ENCODE measurements at regions of chr9 and their contacts with region 1.

Region 1: GRCh38 chr9:35646533-35647265 is 4.0 kb downstream of the SIT1 start:
- DNase-seq: peak in 1 of 2 experiments; percentile 98
- H3K4me3 ChIP-seq: peak overlapping the region; percentile 56 to 79 (median 60)
- H3K27ac ChIP-seq: no peak overlapping the region
- H3K4me1 ChIP-seq: peaks cover 0 to 17% (median 12%) of the 10 kb centered on the region in 4 experiments; a peak in 5 of 7 replicates
- H3K27me3 ChIP-seq: no peaks in the 10 kb centered on the region
- CTCF ChIP-seq: peak; percentile 89 to 98 (median 93)
- EP300 ChIP-seq: no peak
- POLR2A ChIP-seq: peak in 1 of 2 experiments; percentile 66; a peak in 1 of 3 replicates
- RAD21 ChIP-seq: peak; percentile 77 to 84

Region 2: DNA sequence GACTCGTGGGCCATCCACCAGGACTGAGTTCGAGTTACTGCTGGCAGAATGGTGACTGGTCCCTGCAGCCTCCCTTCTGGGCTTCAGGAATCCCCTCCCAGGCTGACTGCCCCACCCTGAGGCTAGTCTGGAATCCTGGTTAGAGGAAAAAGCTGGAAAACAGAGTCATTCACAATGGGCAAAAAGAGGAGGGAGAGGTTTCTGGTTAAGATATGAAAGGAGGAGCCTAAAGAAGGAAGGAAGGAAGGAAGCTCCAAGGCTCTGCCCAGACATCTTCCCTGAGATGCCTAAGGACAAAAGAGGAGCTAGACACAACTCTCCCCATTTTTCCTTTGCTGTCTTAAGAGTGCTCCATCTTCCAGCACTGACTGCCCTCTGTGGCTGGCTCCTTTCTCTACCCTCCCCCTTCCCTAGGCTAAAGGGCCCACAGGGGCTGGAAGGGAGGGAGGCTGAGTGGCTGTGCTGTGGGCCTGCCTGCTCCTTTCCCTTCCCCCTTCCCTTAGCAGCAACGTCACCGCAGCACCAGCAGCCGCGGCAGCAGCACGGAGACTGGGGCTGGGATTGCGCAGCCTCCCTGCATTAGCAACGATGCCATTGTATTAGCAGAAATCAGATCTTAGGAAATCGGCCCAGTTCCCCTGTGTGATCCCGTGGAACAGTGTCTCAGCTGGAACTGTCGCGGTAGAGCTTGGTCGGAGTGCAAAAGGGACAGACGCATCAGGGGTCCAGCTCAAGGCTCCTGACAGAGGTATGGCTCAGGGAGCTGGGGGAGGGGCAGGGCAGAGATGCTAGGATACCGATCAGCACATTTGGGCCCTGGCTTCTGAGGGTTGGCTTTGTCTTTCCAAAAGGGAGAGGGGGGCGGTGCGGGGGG is 108.1 kb before region 1 on chr9:
- CTCF ChIA-PET with region 1: no interaction called
- POLR2A ChIA-PET with region 1: no interaction called
- DNase-seq: peak in 1 of 2 experiments; percentile 73
- H3K4me3 ChIP-seq: peak overlapping the region; percentile 37 to 62 (median 46); a peak in 7 of 8 replicates
- H3K27ac ChIP-seq: no peak overlapping the region; the same call in 1 of the 2 replicates
- H3K4me1 ChIP-seq: peaks cover 10 to 22% (median 13%) of the 10 kb centered on the region in 4 experiments
- H3K27me3 ChIP-seq: no peaks in the 10 kb centered on the region
- CTCF ChIP-seq: no peak
- EP300 ChIP-seq: no peak
- POLR2A ChIP-seq: peak in 1 of 2 experiments; percentile 66; a peak in 2 of 3 replicates
- RAD21 ChIP-seq: 0 out of 4 replicates have a peak, but pooled peaks of 1 of the 2 experiments have one; percentile 2

Region 3: GRCh38 chr9:35603987-35604577 is 42.6 kb before region 1 on chr9:
- CTCF ChIA-PET with region 1: interaction called, 47 read pairs
- POLR2A ChIA-PET with region 1: interaction called, 3 read pairs
- DNase-seq: peak; percentile 98 to 100
- H3K4me3 ChIP-seq: peak overlapping the region; percentile 55 to 76 (median 66)
- H3K27ac ChIP-seq: no peak overlapping the region
- H3K4me1 ChIP-seq: peaks cover 0 to 15% (median 9%) of the 10 kb centered on the region in 4 experiments; a peak in 6 of 7 replicates
- H3K27me3 ChIP-seq: no peaks in the 10 kb centered on the region
- CTCF ChIP-seq: peak; percentile 77 to 86 (median 84)
- EP300 ChIP-seq: no peak; a peak in 1 of 3 replicates
- POLR2A ChIP-seq: peak in 1 of 2 experiments; percentile 60; a peak in 2 of 3 replicates
- RAD21 ChIP-seq: peak; percentile 55 to 70

Region 4: GRCh38 chr9:35616681-35617459 is 29.8 kb before region 1 on chr9:
- CTCF ChIA-PET with region 1: interaction called, 47 read pairs
- POLR2A ChIA-PET with region 1: interaction called, 7 read pairs
- DNase-seq: peak in 1 of 2 experiments; percentile 82
- H3K4me3 ChIP-seq: peak overlapping the region; percentile 44 to 69 (median 50)
- H3K27ac ChIP-seq: no peak overlapping the region
- H3K4me1 ChIP-seq: peaks cover 0 to 9% (median 5%) of the 10 kb centered on the region in 4 experiments; a peak in 4 of 7 replicates
- H3K27me3 ChIP-seq: peaks cover 0 to 18% (median 14%) of the 10 kb centered on the region in 4 experiments; a peak in 4 of 7 replicates
- CTCF ChIP-seq: peak in 2 of 3 experiments; percentile 18 to 33; a peak in 3 of 4 replicates
- EP300 ChIP-seq: no peak
- POLR2A ChIP-seq: peak in 1 of 2 experiments; percentile 78; a peak in 2 of 3 replicates
- RAD21 ChIP-seq: no peak; a peak in 1 of 4 replicates

Region 5: GRCh38 chr9:35657546-35658136 is 10.9 kb after region 1 on chr9 and contains the start of gene RMRP:
- CTCF ChIA-PET with region 1: interaction called, 149 read pairs
- POLR2A ChIA-PET with region 1: interaction called, 53 read pairs
- DNase-seq: peak; percentile 96 to 98
- H3K4me3 ChIP-seq: peak within 1 kb of the TSS; percentile 70 to 92 (median 86)
- H3K27ac ChIP-seq: peak within 1 kb of the TSS; percentile 99
- H3K4me1 ChIP-seq: peaks cover 0 to 2% (median 0%) of the 10 kb centered on the region in 4 experiments; a peak in 4 of 7 replicates
- H3K27me3 ChIP-seq: peaks cover 0 to 7% (median 0%) of the 10 kb centered on the region in 4 experiments; a peak in 1 of 7 replicates
- CTCF ChIP-seq: peak in 2 of 3 experiments; percentile 4 to 8; a peak in 1 of 4 replicates
- EP300 ChIP-seq: peak in 1 of 2 experiments; percentile 91; a peak in 1 of 3 replicates
- POLR2A ChIP-seq: peak in 1 of 2 experiments; percentile 32; a peak in 2 of 3 replicates
- RAD21 ChIP-seq: peak in 1 of 2 experiments; percentile 7; a peak in 2 of 4 replicates
- total RNA-seq, gene RMRP: 14,987 and 16,528 TPM in 2 replicates

Region 6: DNA sequence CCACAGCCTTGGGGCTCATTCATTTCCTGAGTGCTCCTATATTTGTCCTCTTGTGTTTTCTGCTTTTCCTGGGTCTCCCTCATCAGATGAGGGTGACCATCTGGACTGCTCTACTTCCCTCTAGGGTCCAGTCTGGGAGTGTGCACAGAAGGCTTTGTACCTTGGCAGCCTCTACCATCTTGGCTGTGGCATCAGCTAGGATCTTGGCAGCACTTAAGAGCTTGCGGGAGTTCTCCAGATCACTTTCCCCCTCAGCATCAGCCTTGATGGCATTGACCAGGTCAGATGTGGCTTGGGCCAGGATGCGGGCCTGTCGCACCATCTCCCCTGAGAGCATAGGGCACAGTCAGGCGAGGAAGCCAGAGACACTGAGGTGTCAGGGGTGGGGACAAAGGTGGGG is 69.5 kb after region 1 on chr9:
- CTCF ChIA-PET with region 1: interaction called, 20 read pairs
- POLR2A ChIA-PET with region 1: no interaction called
- DNase-seq: no peak
- H3K4me3 ChIP-seq: no peak overlapping the region
- H3K27ac ChIP-seq: no peak overlapping the region
- H3K4me1 ChIP-seq: no peaks in the 10 kb centered on the region
- H3K27me3 ChIP-seq: no peaks in the 10 kb centered on the region
- CTCF ChIP-seq: peak in 1 of 3 experiments; percentile 4; a peak in 1 of 4 replicates
- EP300 ChIP-seq: no peak
- POLR2A ChIP-seq: no peak
- RAD21 ChIP-seq: no peak

Measured in H1 (cell line).